Activated CD4-positive, alpha-beta T cell treated with anti-CD3 and anti-CD28 coated beads for 36 hours (primary cell): ENCODE measurements at regions of chr17 and their contacts with region 1.

Region 1: DNA sequence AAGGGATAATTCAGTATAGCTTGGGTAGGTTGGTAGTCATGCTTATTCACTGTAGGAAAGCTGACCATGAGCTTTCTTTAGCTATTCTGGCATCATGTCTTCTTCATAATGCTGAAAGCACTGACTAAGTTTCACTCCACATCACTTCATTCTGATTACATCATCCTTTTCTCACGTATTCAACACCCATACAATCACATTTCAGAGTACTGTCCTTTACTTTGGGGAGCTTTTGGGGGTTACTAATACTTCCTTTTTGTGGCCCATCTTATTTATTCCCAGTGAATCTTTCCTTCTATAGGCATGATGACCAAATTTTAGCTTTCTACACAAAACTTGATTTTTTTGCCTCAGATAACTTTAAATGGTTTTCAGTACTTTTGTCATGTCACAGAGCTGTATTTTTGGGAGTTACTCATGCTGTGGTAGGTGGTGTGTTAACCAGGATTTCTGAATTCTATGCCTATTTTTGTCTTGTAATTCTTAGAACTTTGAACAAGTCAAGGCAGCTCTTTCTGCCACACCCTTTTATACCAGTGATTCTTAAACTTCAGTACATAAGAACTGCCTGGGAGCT is 23.5 kb downstream of the TADA2A start:
- DNase-seq: no peak
- ATAC-seq: peak; percentile 89
- H3K4me3 Mint-ChIP-seq: peak overlapping the region; percentile 24
- H3K27ac Mint-ChIP-seq: peak overlapping the region; percentile 91
- H3K4me1 Mint-ChIP-seq: peaks cover 27% of the 10 kb centered on the region
- H3K27me3 Mint-ChIP-seq: no peaks in the 10 kb centered on the region

Region 2: GRCh38 chr17:37388266-37388665 is 41.9 kb before region 1 on chr17:
- CTCF ChIA-PET with region 1: no interaction called
- POLR2A ChIA-PET with region 1: no interaction called
- intact Hi-C with region 1: no loop called
- DNase-seq: no peak
- ATAC-seq: no peak
- H3K4me3 Mint-ChIP-seq: no peak overlapping the region
- H3K27ac Mint-ChIP-seq: no peak overlapping the region
- H3K4me1 Mint-ChIP-seq: peaks cover 19% of the 10 kb centered on the region
- H3K27me3 Mint-ChIP-seq: no peaks in the 10 kb centered on the region

Region 3: GRCh38 chr17:37406635-37407461 is 23.3 kb before region 1 on chr17 and contains the starts of genes ACACA and TADA2A:
- CTCF ChIA-PET with region 1: interaction called, 5 read pairs
- POLR2A ChIA-PET with region 1: no interaction called
- intact Hi-C with region 1: loop called in 1 of 2 experiments (anchors 1 kb)
- DNase-seq: peak; percentile 88
- ATAC-seq: peak; percentile 93
- H3K4me3 Mint-ChIP-seq: peak within 1 kb of the TSS; percentile 99
- H3K27ac Mint-ChIP-seq: peak within 1 kb of the TSS; percentile 98
- H3K4me1 Mint-ChIP-seq: peaks cover 46% of the 10 kb centered on the region
- H3K27me3 Mint-ChIP-seq: no peaks in the 10 kb centered on the region
- total RNA-seq, gene ACACA: 57.2 to 61.1 TPM
- total RNA-seq, gene TADA2A: 29.9 to 32.9 TPM